ENCODE measurements at regions of chr17 and their contacts with region 1.

Region 1: DNA sequence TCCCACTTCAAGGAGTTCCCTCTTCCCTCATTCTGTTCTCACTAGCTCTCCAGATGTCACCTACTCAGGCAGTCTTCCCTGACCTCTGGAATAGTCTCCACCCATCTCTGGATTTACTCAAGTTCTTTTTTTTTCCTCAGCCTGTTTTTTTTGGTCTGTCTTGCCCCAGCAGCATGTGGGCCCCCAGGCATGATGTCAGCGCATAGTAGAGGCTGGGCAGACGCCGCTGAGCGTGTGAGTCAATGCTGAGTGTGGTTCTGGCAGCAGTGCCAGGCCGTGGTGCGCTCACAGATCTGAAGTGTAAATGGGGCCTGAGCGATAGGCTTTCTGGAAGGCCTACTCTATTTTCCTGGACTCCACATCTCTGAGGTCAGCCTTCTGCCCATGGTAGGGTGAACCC is 2.7 kb upstream of the KCNJ18 start:
- DNase-seq: no peak
- ATAC-seq: peak in 2 of 4 donors; percentile 30 to 70
- H3K4me3 ChIP-seq: no peak overlapping the region
- H3K27ac ChIP-seq: no peak overlapping the region
- H3K4me1 ChIP-seq: no peaks in the 10 kb centered on the region
- H3K27me3 ChIP-seq: no peaks in the 10 kb centered on the region
- CTCF ChIP-seq: no peak

Region 2: GRCh38 chr17:21400816-21401593 is 288.6 kb before region 1 on chr17:
- intact Hi-C with region 1: loop called in 1 of 3 experiments (anchors 5 kb)
- DNase-seq: peak in 1 of 6 donors; percentile 45
- ATAC-seq: no peak
- H3K4me3 ChIP-seq: no peak overlapping the region
- H3K27ac ChIP-seq: no peak overlapping the region
- H3K4me1 ChIP-seq: no peaks in the 10 kb centered on the region
- H3K27me3 ChIP-seq: no peaks in the 10 kb centered on the region
- CTCF ChIP-seq: no peak